ENCODE measurements at regions of chr6 and their contacts with region 1.

Region 1: DNA sequence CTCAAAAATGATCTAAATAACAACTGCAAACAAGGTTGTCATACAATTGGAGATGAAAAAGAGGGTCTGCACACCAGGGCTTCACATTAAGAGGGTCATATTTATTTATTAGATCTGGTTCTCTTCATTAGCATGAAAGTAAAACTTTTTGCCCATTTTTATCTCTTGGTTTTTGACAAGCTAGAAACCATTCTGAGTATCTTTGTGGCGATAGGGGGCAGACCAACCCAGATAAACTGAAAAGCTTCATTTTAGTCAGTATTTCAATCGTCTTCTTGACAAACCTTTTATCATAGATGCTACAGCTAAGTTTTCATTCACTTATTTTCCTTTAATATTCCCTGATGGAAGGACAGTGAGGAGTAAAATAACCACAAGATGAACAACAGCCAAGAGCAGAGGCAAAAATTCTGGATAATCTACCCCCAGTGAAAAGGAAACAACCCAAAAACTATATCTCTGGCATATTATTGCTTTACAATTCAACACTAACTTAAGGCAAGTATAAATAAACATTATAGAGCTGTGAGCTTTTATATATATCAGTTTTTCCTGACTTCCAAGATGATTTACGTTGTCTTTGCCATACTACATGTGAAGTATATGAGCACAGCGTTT is 45.2 kb downstream of the THEMIS start:
- DNase-seq: no peak
- H3K4me3 ChIP-seq: no peak overlapping the region
- H3K27ac ChIP-seq: no peak overlapping the region
- H3K4me1 ChIP-seq: no peaks in the 10 kb centered on the region
- H3K27me3 ChIP-seq: peaks cover 0 to 1% (median 0%) of the 10 kb centered on the region in 4 experiments; a peak in 1 of 7 replicates
- CTCF ChIP-seq: peak in 2 of 3 experiments; percentile 23 to 48; a peak in 2 of 4 replicates
- EP300 ChIP-seq: no peak
- POLR2A ChIP-seq: no peak
- RAD21 ChIP-seq: peak; percentile 69 to 72

Region 2: DNA sequence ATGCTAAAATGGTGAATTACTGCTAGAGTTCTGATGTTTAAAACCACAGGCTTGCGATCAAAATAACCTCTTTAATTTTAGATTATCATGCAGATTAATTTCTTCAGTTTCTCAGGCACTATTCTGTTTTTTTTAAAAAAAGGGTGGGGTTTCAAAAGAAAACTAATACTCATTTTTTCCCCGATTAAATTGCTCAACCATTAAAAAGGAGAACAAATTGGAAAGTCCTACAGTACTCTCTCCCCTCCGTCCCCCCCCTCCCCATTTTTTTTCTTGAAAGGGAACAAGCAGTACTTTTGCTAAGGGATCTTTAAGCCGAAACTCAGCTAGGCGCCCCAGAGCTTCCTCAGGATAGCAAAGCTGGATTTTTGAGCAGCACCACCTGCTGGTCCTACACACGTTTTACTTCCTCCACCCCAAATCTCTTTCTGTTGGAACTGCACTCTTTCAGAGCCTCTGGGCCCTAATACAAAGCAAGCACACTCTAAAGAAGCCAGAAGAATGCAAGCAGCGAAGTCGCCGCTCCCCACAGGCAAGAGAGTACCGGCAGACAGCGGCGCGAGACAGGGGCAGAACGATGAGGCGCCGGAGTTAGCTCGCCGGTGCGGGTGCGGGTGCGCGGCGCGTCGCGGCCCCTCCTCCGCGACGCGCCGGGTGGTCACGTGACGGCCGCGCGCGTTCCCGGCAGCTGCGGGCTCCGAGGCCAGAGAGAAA is 589.3 kb before region 1 on chr6 and contains the start of gene RNF146:
- CTCF ChIA-PET with region 1: no interaction called
- POLR2A ChIA-PET with region 1: no interaction called
- DNase-seq: peak; percentile 41 to 81
- H3K4me3 ChIP-seq: peak within 1 kb of the TSS; percentile 86 to 96 (median 90)
- H3K27ac ChIP-seq: peak within 1 kb of the TSS; percentile 91
- H3K4me1 ChIP-seq: peaks cover 0 to 5% (median 0%) of the 10 kb centered on the region in 4 experiments; a peak in 1 of 7 replicates
- H3K27me3 ChIP-seq: no peaks in the 10 kb centered on the region
- CTCF ChIP-seq: peak; percentile 28 to 59 (median 43)
- EP300 ChIP-seq: no peak
- POLR2A ChIP-seq: no peak; a peak in 1 of 3 replicates
- RAD21 ChIP-seq: peak; percentile 42 to 47
- total RNA-seq, gene RNF146: 28.8 and 30.8 TPM in 2 replicates

Region 3: GRCh38 chr6:127833336-127833735 is 22.3 kb before region 1 on chr6:
- CTCF ChIA-PET with region 1: interaction called, 22 read pairs
- POLR2A ChIA-PET with region 1: no interaction called
- DNase-seq: no peak
- H3K4me3 ChIP-seq: no peak overlapping the region
- H3K27ac ChIP-seq: no peak overlapping the region
- H3K4me1 ChIP-seq: no peaks in the 10 kb centered on the region
- H3K27me3 ChIP-seq: peaks cover 0 to 3% (median 0%) of the 10 kb centered on the region in 4 experiments; a peak in 1 of 7 replicates
- CTCF ChIP-seq: no peak
- EP300 ChIP-seq: no peak
- POLR2A ChIP-seq: no peak
- RAD21 ChIP-seq: no peak

Region 4: DNA sequence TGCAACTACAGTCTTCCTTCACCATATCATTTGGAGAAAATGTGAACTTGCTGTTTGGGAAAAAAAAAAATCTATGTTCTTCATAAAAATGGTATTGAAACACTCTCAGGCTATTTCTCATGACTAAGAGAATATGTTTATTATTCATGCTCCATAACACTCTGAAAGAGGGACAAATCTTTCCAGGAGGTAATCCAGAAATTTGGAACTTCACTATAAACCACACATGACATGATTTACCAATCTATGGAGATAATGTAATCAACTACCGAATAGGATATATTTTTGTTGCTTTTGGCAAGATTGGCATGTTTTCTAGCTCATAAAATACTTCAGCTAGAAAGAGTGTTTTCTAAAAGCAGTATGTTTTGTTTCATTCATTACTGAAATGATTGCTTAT is 11.1 kb before region 1 on chr6:
- CTCF ChIA-PET with region 1: interaction called, 15 read pairs
- POLR2A ChIA-PET with region 1: no interaction called
- DNase-seq: no peak
- H3K4me3 ChIP-seq: no peak overlapping the region
- H3K27ac ChIP-seq: no peak overlapping the region
- H3K4me1 ChIP-seq: no peaks in the 10 kb centered on the region
- H3K27me3 ChIP-seq: no peaks in the 10 kb centered on the region
- CTCF ChIP-seq: no peak
- EP300 ChIP-seq: no peak
- POLR2A ChIP-seq: no peak
- RAD21 ChIP-seq: no peak

Region 5: DNA sequence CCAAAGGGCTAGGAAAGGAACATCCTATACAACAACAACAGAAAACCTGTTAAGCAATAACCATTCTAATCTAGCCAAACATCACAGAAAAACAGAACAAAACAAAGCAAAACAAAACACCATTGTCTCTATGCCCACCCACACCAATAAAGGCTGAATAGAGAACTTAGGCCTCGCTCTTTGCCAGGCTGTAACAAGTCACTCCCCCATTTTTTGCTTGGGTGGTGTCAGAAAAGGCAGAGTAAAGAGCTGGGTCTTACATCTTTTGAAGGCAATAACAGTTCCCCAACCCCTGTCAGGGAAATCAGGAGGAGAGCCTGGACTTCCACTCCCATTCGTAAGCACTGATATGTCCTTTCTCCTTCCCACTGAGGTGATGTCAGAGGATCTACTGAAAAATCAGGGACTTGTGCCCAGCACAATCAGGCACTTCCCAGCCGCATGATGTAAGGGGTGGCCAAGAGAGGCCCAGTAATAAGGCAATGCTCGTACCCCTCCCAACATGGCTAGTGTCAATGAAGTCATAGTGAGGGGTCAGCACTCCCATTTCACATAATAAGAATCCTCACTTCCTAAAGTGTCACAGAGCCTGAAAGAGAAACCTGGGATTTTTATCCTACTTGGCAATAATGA is 14.2 kb after region 1 on chr6:
- CTCF ChIA-PET with region 1: interaction called, 27 read pairs
- POLR2A ChIA-PET with region 1: no interaction called
- DNase-seq: no peak
- H3K4me3 ChIP-seq: no peak overlapping the region
- H3K27ac ChIP-seq: no peak overlapping the region
- H3K4me1 ChIP-seq: peaks cover 0 to 3% (median 0%) of the 10 kb centered on the region in 4 experiments; a peak in 1 of 7 replicates
- H3K27me3 ChIP-seq: no peaks in the 10 kb centered on the region
- CTCF ChIP-seq: no peak
- EP300 ChIP-seq: no peak
- POLR2A ChIP-seq: no peak
- RAD21 ChIP-seq: no peak

Region 6: GRCh38 chr6:127932708-127933107 is 77.1 kb after region 1 on chr6:
- CTCF ChIA-PET with region 1: no interaction called
- POLR2A ChIA-PET with region 1: no interaction called
- DNase-seq: no peak
- H3K4me3 ChIP-seq: no peak overlapping the region
- H3K27ac ChIP-seq: no peak overlapping the region
- H3K4me1 ChIP-seq: no peaks in the 10 kb centered on the region
- H3K27me3 ChIP-seq: no peaks in the 10 kb centered on the region
- CTCF ChIP-seq: no peak
- EP300 ChIP-seq: no peak
- POLR2A ChIP-seq: no peak
- RAD21 ChIP-seq: no peak

Region 7: GRCh38 chr6:127952831-127953230 is 97.2 kb after region 1 on chr6:
- CTCF ChIA-PET with region 1: interaction called, 14 read pairs
- POLR2A ChIA-PET with region 1: no interaction called
- DNase-seq: no peak
- H3K4me3 ChIP-seq: no peak overlapping the region
- H3K27ac ChIP-seq: no peak overlapping the region
- H3K4me1 ChIP-seq: no peaks in the 10 kb centered on the region
- H3K27me3 ChIP-seq: no peaks in the 10 kb centered on the region
- CTCF ChIP-seq: no peak
- EP300 ChIP-seq: no peak
- POLR2A ChIP-seq: no peak
- RAD21 ChIP-seq: no peak

Region 8: GRCh38 chr6:128327890-128328289 is 472.2 kb after region 1 on chr6:
- CTCF ChIA-PET with region 1: interaction called, 14 read pairs
- POLR2A ChIA-PET with region 1: no interaction called
- DNase-seq: peak in 1 of 2 experiments; percentile 50
- H3K4me3 ChIP-seq: no peak overlapping the region
- H3K27ac ChIP-seq: no peak overlapping the region
- H3K4me1 ChIP-seq: no peaks in the 10 kb centered on the region
- H3K27me3 ChIP-seq: no peaks in the 10 kb centered on the region
- CTCF ChIP-seq: peak in 2 of 3 experiments; percentile 51 to 78; a peak in 3 of 4 replicates
- EP300 ChIP-seq: no peak
- POLR2A ChIP-seq: no peak
- RAD21 ChIP-seq: peak; percentile 81 to 82